ENCODE measurements at regions of chr12 and their contacts with region 1.

Region 1: GRCh38 chr12:77010691-77011548 is 54.4 kb downstream of the E2F7 start:
- DNase-seq: peak; percentile 77
- H3K4me3 ChIP-seq: no peak overlapping the region; a peak in 1 of 4 replicates
- H3K27ac ChIP-seq: no peak overlapping the region
- H3K4me1 ChIP-seq: peaks cover 0 to 3% of the 10 kb centered on the region in 2 experiments; a peak in 2 of 4 replicates
- H3K27me3 ChIP-seq: no peaks in the 10 kb centered on the region
- CTCF ChIP-seq: peak; percentile 99
- EP300 ChIP-seq: no peak
- RAD21 ChIP-seq: peak; percentile 93

Region 2: DNA sequence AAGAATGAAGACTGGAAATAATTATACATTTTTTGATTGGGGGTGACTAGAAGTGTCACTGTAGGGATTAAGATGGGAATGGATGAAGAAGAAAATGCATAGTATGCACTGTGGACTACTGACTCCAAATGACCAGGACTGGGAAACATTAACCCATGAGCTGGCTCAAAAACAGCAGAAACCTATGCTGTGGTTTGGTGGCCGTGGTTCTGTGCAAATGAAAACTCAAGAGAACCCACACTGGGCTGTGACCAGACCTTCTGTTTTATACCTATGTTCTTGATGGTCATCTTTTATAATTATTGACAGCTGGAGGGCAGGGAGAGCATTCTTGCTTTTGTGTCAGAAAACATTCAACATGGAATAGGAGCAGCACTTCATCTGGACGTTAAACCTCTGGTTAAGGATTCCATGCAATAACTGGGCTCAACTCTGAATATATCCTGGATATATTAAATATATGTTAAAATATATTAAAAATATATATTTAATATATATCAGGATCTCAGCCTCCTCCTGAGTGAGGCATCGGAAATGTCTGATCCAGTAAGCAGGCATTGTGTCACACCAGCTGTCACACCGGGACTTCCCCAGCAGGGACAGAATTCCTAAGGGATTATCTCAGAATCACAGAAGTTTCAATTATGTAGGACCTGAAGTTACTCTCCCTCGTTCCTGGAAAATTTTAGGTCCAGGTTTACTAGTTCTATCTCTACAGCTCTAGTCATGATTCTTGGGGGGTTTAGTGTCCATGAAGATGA is 711.2 kb before region 1 on chr12:
- CTCF ChIA-PET with region 1: no interaction called
- POLR2A ChIA-PET with region 1: no interaction called
- DNase-seq: no peak
- H3K4me3 ChIP-seq: no peak overlapping the region
- H3K27ac ChIP-seq: no peak overlapping the region; a peak in 2 of 4 replicates
- H3K4me1 ChIP-seq: peaks cover 0 to 4% of the 10 kb centered on the region in 2 experiments; a peak in 1 of 4 replicates
- H3K27me3 ChIP-seq: no peaks in the 10 kb centered on the region
- CTCF ChIP-seq: no peak
- EP300 ChIP-seq: no peak
- RAD21 ChIP-seq: no peak

Region 3: DNA sequence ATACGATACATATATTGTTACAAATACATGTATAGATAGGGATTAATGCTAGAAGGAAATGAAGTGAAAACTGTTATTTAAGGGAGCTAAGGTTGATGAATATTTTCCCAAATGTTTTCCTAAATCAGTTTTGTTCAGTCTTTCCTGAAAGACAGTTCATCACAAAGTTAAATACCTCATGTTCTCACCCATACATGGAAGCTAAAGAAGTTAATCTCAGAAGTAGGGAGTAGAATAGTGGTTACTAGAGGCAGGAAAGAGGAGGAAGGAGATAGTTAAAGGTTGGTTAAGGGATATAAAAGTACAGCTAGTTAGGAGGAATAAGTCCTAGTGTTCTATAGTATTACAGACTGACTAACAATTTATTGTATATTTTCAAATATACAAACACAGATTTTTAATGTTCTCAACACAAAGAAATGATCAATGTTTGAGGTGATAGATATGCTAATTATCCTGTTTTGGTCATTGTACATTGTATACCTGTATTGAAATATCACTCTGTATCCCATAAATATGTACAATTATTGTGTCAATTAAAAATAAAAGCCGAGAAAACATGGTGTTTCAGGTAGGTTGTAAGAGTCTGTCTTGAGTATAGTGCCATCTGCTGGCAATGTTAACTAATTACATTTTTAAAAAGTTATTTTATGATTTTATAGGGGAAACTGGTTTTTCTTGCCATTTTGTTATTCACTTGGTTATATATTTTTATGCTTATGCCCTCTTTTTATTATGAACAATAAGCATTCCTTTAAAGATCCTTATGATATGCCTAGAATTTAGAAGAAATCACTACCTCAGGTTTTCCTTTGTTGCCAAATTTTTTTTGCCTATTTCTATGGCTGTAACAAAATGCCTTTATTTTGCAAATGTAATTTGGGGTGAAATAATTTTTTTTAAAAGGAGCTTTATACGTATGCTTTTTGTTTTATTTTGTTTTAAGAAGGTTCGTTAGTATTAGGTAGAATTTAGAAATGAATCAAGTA is 220.1 kb before region 1 on chr12:
- CTCF ChIA-PET with region 1: interaction called, 18 read pairs
- POLR2A ChIA-PET with region 1: no interaction called
- DNase-seq: peak; percentile 36
- H3K4me3 ChIP-seq: no peak overlapping the region; a peak in 1 of 4 replicates
- H3K27ac ChIP-seq: no peak overlapping the region
- H3K4me1 ChIP-seq: no peaks in the 10 kb centered on the region
- H3K27me3 ChIP-seq: no peaks in the 10 kb centered on the region
- CTCF ChIP-seq: peak; percentile 74
- EP300 ChIP-seq: no peak
- RAD21 ChIP-seq: peak; percentile 81

Region 4: GRCh38 chr12:76863005-76863670 is 147.8 kb before region 1 on chr12:
- CTCF ChIA-PET with region 1: interaction called, 10 read pairs
- POLR2A ChIA-PET with region 1: interaction called, 3 read pairs
- DNase-seq: no peak
- H3K4me3 ChIP-seq: no peak overlapping the region
- H3K27ac ChIP-seq: peak overlapping the region; percentile 60 to 80
- H3K4me1 ChIP-seq: peaks cover 3 to 16% of the 10 kb centered on the region in 2 experiments
- H3K27me3 ChIP-seq: no peaks in the 10 kb centered on the region
- CTCF ChIP-seq: no peak
- EP300 ChIP-seq: no peak
- RAD21 ChIP-seq: no peak

Region 5: DNA sequence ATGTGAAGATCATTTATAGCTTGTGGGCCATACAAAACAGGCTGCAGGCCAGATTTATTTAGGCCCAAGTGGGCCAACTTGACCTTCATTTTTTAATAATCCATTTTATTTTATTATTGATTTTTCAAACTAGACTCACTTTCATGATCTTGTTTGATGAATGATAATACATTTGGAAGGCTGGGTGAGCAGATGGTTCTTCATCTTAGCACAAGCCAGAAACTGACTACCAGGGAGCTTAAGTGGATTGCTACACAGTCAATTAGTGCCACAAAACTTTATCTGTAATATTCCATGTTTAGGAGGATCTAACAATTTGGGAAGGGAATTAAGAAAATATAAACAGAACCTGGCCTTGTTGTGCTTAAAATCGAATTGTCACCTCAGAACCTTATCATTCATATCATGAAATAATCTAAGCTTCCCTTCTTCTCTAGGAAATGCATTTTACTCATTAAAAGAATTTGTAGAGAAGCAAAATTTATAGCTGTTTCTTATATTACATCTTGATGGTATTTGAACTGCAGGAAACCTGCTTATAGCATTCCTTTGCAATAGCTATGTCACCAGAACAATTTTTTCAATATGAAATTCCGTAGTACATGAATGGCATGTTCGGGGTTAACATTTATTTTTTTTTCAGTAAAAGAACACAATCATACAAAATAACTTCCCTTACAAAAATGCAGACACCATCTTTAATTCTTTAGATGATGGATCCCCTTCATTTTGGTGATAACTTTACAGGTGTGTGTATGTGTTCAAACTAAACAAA is 70.1 kb before region 1 on chr12:
- CTCF ChIA-PET with region 1: interaction called, 11 read pairs
- POLR2A ChIA-PET with region 1: no interaction called
- DNase-seq: no peak
- H3K4me3 ChIP-seq: no peak overlapping the region
- H3K27ac ChIP-seq: peak overlapping the region in 1 of 2 experiments; percentile 47; a peak in 1 of 4 replicates
- H3K4me1 ChIP-seq: peaks cover 6 to 16% of the 10 kb centered on the region in 2 experiments; a peak in 3 of 4 replicates
- H3K27me3 ChIP-seq: no peaks in the 10 kb centered on the region
- CTCF ChIP-seq: no peak
- EP300 ChIP-seq: no peak
- RAD21 ChIP-seq: no peak

Region 6: GRCh38 chr12:76952995-76953394 is 57.9 kb before region 1 on chr12:
- CTCF ChIA-PET with region 1: interaction called, 32 read pairs
- POLR2A ChIA-PET with region 1: no interaction called
- DNase-seq: peak; percentile 55
- H3K4me3 ChIP-seq: no peak overlapping the region
- H3K27ac ChIP-seq: peak overlapping the region in 1 of 2 experiments; percentile 64; a peak in 2 of 4 replicates
- H3K4me1 ChIP-seq: peaks cover 0 to 27% of the 10 kb centered on the region in 2 experiments; a peak in 2 of 4 replicates
- H3K27me3 ChIP-seq: no peaks in the 10 kb centered on the region
- CTCF ChIP-seq: peak; percentile 40; the same call in 1 of the 2 replicates
- EP300 ChIP-seq: peak in 1 of 2 experiments; percentile 59; a peak in 1 of 4 replicates
- RAD21 ChIP-seq: peak; percentile 72

Region 7: DNA sequence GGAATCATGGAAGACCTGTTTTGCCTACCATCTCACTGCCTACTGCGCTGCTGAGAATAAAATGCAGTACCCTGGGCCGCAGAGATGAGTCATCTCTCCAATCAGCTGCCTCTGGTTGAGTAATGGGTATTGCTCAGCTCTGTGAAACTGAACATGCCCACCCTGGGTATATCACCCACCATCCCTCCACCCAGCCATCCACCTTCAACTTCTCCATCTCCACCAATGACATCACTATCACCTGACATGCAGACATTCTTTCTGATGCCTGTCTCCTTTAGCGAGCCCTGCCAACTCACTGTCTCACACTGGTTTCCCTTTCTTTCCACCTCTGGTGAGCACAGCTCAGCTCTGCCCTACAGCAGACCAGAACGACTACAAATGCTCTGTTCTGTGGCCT is 20.8 kb after region 1 on chr12:
- CTCF ChIA-PET with region 1: interaction called, 19 read pairs
- POLR2A ChIA-PET with region 1: no interaction called
- DNase-seq: peak; percentile 12
- H3K4me3 ChIP-seq: no peak overlapping the region
- H3K27ac ChIP-seq: peak overlapping the region; percentile 31 to 80; a peak in 2 of 4 replicates
- H3K4me1 ChIP-seq: peaks cover 9 to 15% of the 10 kb centered on the region in 2 experiments; a peak in 1 of 4 replicates
- H3K27me3 ChIP-seq: no peaks in the 10 kb centered on the region
- CTCF ChIP-seq: no peak
- EP300 ChIP-seq: no peak; a peak in 1 of 4 replicates
- RAD21 ChIP-seq: no peak

Measured in SK-N-SH (cell line).